ENCODE measurements at regions of chr11 and their contacts with region 1.

Region 1: DNA sequence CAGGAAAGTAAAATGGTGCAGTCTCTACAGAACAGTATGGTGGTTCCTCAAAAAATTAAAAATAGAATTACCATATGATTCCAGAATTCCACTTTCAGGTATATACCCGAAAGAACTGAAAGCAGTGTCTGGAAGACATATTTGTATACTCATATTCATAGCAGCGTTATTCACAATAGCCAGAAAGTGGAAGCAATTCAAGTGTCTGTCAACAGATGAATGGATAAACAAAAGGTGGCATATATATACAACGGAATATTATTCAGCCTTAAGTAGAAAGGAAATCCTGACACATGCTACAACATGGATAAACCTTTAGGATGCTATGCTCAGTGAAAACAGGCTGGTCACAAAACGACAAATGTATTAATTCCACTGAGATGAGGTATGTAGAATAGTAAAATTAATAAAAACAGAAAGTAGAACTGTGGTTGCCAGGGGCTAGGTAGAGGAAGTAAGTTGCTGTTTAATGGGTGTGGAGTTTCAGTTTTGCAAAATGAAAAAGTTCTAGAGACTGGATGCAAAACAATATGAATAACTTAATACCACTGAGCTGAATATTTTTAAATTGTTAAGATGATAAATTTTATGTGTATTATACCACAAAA is 14.5 kb downstream of the SAA1 start:
- DNase-seq: peak; percentile 15 to 35 (median 20)
- H3K4me3 ChIP-seq: peak overlapping the region in 2 of 3 experiments; percentile 33 to 66
- H3K4me3 Mint-ChIP-seq: peak overlapping the region; percentile 39 to 57
- H3K27ac ChIP-seq: peak overlapping the region; percentile 50 to 89
- H3K27ac Mint-ChIP-seq: peak overlapping the region; percentile 77 to 92 (median 87)
- H3K4me1 ChIP-seq: peaks cover 51 to 64% of the 10 kb centered on the region in 2 donors
- H3K4me1 Mint-ChIP-seq: peaks cover 47% of the 10 kb centered on the region
- H3K27me3 ChIP-seq: no peaks in the 10 kb centered on the region
- H3K27me3 Mint-ChIP-seq: no peaks in the 10 kb centered on the region
- CTCF ChIP-seq: no peak

Region 2: GRCh38 chr11:18321980-18322711 is 41.6 kb after region 1 on chr11 and contains the starts of genes GTF2H1 and HPS5:
- intact Hi-C with region 1: loop called in 1 of 2 experiments (anchors 5 kb)
- DNase-seq: peak; percentile 98 to 99 (median 99)
- H3K4me3 ChIP-seq: peak within 1 kb of the TSS; percentile 58 to 82 (median 82)
- H3K4me3 Mint-ChIP-seq: peak within 1 kb of the TSS; percentile 95 to 97
- H3K27ac ChIP-seq: peak within 1 kb of the TSS; percentile 93 to 94
- H3K27ac Mint-ChIP-seq: peak within 1 kb of the TSS; percentile 99 to 100 (median 100)
- H3K4me1 ChIP-seq: peaks cover 35 to 50% of the 10 kb centered on the region in 2 donors
- H3K4me1 Mint-ChIP-seq: peaks cover 60% of the 10 kb centered on the region
- H3K27me3 ChIP-seq: no peaks in the 10 kb centered on the region
- H3K27me3 Mint-ChIP-seq: no peaks in the 10 kb centered on the region
- CTCF ChIP-seq: no peak
- polyA plus RNA-seq, gene GTF2H1: 23.0 to 26.6 (median 26.2) TPM
- polyA plus RNA-seq, gene HPS5: 11.4 to 17.7 (median 12.9) TPM

Region 3: DNA sequence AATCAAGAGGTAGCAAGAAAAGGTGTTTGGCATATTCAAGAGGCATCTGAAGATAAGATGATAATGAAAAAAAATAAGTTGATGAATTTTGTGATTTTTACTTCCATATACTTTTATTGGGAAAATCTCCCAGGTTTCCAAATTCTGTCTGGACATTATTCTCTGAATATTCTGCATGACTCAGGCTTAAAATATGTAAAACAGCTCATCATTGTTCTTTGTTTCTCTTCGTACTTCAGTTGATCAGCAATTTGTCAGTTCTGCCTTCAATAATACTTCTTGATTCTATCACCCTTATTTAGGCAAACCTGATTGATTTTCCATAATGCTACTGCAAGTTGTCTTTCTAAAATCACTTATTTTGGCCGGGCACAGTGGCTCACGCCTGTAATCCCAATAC is 72.0 kb after region 1 on chr11:
- intact Hi-C with region 1: no loop called
- DNase-seq: no peak
- H3K4me3 ChIP-seq: no peak overlapping the region
- H3K4me3 Mint-ChIP-seq: no peak overlapping the region
- H3K27ac ChIP-seq: no peak overlapping the region
- H3K27ac Mint-ChIP-seq: no peak overlapping the region
- H3K4me1 ChIP-seq: no peaks in the 10 kb centered on the region
- H3K4me1 Mint-ChIP-seq: no peaks in the 10 kb centered on the region
- H3K27me3 ChIP-seq: no peaks in the 10 kb centered on the region
- H3K27me3 Mint-ChIP-seq: peaks cover 0 to 2% (median 0%) of the 10 kb centered on the region in 3 donors
- CTCF ChIP-seq: no peak

Measured in CD14-positive monocyte (primary cell).